ENCODE measurements at regions of chr18 and their contacts with region 1.

Region 1: GRCh38 chr18:4004183-4004829 is 450.8 kb downstream of the DLGAP1 start:
- DNase-seq: no peak
- ATAC-seq: no peak
- H3K4me3 ChIP-seq: no peak overlapping the region
- H3K4me1 ChIP-seq: no peaks in the 10 kb centered on the region
- CTCF ChIP-seq: no peak

Region 2: DNA sequence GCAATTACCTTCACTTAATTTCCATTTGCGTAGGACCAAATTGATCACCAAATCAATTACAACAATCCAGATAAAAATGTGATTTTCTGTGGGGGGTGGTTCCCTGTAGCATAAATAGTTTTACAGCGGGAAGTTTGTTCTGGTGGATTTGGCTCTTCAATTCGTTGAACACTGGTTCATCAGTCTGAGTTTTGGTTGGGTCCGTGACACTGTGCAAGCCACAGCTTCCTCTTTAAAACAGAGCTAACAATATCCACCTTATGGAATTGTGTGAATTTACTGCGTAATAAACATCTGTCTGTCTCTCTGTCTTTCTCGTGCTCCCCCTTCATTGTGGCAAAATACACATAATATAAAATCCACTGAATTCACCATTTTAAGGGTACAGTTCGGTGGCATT is 243.6 kb before region 1 on chr18:
- intact Hi-C with region 1: loop called in 1 of 2 experiments (anchors 10 kb)
- DNase-seq: no peak
- ATAC-seq: no peak
- H3K4me3 ChIP-seq: no peak overlapping the region
- H3K4me1 ChIP-seq: no peaks in the 10 kb centered on the region
- CTCF ChIP-seq: no peak

Region 3: GRCh38 chr18:3852321-3852720 is 152.0 kb before region 1 on chr18:
- intact Hi-C with region 1: no loop called
- DNase-seq: no peak
- ATAC-seq: no peak
- H3K4me3 ChIP-seq: no peak overlapping the region
- H3K4me1 ChIP-seq: no peaks in the 10 kb centered on the region
- CTCF ChIP-seq: no peak

Measured in mucosa of descending colon (tissue), 3 donors.